Activated T-helper 1 cell treated with anti-CD3 and anti-CD28 coated beads, Interleukin-12 subunit alpha, Interleukin-12 subunit beta, Interleukin-2, Interleukin-4 antibody, amounts not matched to agents 30 ng/mL and 10 ng/mL and 1 ng/mL, durations not matched to agents 14 hours and 24 hours and 36 hours (primary cell): ENCODE measurements at regions of chr12 and their contacts with region 1.

Region 1: GRCh38 chr12:50699940-50700339 is 64.0 kb upstream of the ATF1 start:
- DNase-seq: no peak
- H3K4me3 Mint-ChIP-seq: no peak overlapping the region
- H3K27ac Mint-ChIP-seq: no peak overlapping the region
- H3K4me1 Mint-ChIP-seq: no peaks in the 10 kb centered on the region
- H3K27me3 Mint-ChIP-seq: no peaks in the 10 kb centered on the region

Region 2: GRCh38 chr12:50685641-50686040 is 14.3 kb before region 1 on chr12:
- intact Hi-C with region 1: loop called (anchors 2 kb)
- DNase-seq: no peak
- H3K4me3 Mint-ChIP-seq: no peak overlapping the region
- H3K27ac Mint-ChIP-seq: no peak overlapping the region
- H3K4me1 Mint-ChIP-seq: no peaks in the 10 kb centered on the region
- H3K27me3 Mint-ChIP-seq: no peaks in the 10 kb centered on the region